Panc1 (cell line): ENCODE measurements at regions of chr1 and their contacts with region 1.

Region 1: DNA sequence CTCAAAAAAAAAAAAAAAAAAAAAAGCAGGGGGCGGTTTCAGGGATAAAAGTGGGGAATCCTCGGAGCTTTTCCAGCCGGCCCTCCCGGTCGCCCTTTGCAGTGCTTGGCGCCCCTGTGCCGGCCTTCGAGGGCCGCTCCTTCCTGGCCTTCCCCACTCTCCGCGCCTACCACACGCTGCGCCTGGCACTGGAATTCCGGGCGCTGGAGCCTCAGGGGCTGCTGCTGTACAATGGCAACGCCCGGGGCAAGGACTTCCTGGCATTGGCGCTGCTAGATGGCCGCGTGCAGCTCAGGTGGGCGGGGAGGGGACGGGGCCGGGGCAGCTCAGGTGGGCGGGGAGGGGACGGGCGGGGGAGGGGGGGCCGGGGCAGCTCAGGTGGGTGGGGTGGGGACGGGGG is 25.3 kb downstream of the RNF223 start:
- DNase-seq: no peak
- ATAC-seq: no peak
- H3K4me3 ChIP-seq: no peak overlapping the region
- H3K27ac ChIP-seq: no peak overlapping the region
- H3K4me1 ChIP-seq: no peaks in the 10 kb centered on the region
- H3K27me3 ChIP-seq: no peaks in the 10 kb centered on the region
- CTCF ChIP-seq: no peak

Region 2: GRCh38 chr1:966611-967300 is 82.0 kb before region 1 on chr1:
- CTCF ChIA-PET with region 1: no interaction called
- POLR2A ChIA-PET with region 1: no interaction called
- in situ Hi-C with region 1: no loop called
- intact Hi-C with region 1: no loop called
- DNase-seq: no peak
- ATAC-seq: peak; percentile 89
- H3K4me3 ChIP-seq: peak overlapping the region; percentile 59 to 68
- H3K27ac ChIP-seq: peak overlapping the region; percentile 84
- H3K4me1 ChIP-seq: peaks cover 13% of the 10 kb centered on the region
- H3K27me3 ChIP-seq: no peaks in the 10 kb centered on the region
- CTCF ChIP-seq: no peak

Region 3: GRCh38 chr1:1019122-1019999 is 29.4 kb before region 1 on chr1:
- CTCF ChIA-PET with region 1: no interaction called
- POLR2A ChIA-PET with region 1: interaction called, 11 read pairs
- in situ Hi-C with region 1: no loop called
- intact Hi-C with region 1: no loop called
- DNase-seq: no peak
- ATAC-seq: peak; percentile 82
- H3K4me3 ChIP-seq: peak overlapping the region; percentile 22 to 26; a peak in 2 of 4 replicates
- H3K27ac ChIP-seq: no peak overlapping the region; the same call in 1 of the 2 replicates
- H3K4me1 ChIP-seq: peaks cover 43% of the 10 kb centered on the region
- H3K27me3 ChIP-seq: no peaks in the 10 kb centered on the region
- CTCF ChIP-seq: peak; percentile 88

Region 4: GRCh38 chr1:1038694-1039093 is 10.1 kb before region 1 on chr1:
- CTCF ChIA-PET with region 1: no interaction called
- POLR2A ChIA-PET with region 1: no interaction called
- in situ Hi-C with region 1: no loop called
- intact Hi-C with region 1: no loop called
- DNase-seq: no peak
- ATAC-seq: no peak
- H3K4me3 ChIP-seq: no peak overlapping the region
- H3K27ac ChIP-seq: no peak overlapping the region
- H3K4me1 ChIP-seq: peaks cover 8% of the 10 kb centered on the region; the same call in 1 of the 2 replicates
- H3K27me3 ChIP-seq: no peaks in the 10 kb centered on the region
- CTCF ChIP-seq: no peak